ENCODE measurements at regions of chr16 and their contacts with region 1.

Region 1: GRCh38 chr16:84548971-84549844 is 44.7 kb upstream of the MEAK7 start:
- DNase-seq: peak; percentile 82
- ATAC-seq: peak; percentile 57
- H3K4me3 Mint-ChIP-seq: peak overlapping the region; percentile 84
- H3K27ac Mint-ChIP-seq: peak overlapping the region; percentile 98
- H3K4me1 Mint-ChIP-seq: peaks cover 54% of the 10 kb centered on the region
- H3K27me3 Mint-ChIP-seq: no peaks in the 10 kb centered on the region
- CTCF ChIP-seq: peak; percentile 19

Region 2: DNA sequence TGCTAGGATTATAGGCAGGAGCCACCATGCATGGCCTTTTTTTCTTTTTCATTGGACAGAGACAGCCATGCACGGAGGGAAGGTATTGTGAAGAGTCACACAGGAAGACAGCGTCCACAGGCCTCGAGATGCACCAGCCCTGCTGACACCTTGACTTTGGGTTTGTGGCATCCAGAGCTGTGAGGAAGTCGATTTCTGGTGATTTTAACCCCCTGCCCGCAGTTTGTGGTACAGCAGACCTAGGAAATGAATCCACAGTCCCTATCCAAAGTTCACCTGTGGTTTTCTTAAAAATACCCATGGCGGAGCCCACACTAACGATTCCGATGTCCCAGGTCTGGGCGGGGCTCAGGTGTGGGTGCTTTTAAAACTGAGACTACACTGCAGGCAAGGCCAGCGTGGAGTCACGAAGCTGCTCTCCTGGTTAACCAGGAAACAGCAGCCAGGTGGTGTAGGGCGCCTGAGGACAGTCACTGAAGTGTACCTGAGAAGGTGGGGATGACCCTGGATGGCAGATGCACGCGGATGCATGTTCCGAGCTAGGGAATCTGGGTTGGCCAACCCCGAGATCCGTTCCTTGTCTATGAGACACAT is 30.4 kb before region 1 on chr16:
- CTCF ChIA-PET with region 1: interaction called, 11 read pairs
- POLR2A ChIA-PET with region 1: interaction called, 40 read pairs
- intact Hi-C with region 1: loop called (anchors 2 kb)
- DNase-seq: peak; percentile 90
- ATAC-seq: peak; percentile 59
- H3K4me3 Mint-ChIP-seq: peak overlapping the region; percentile 57
- H3K27ac Mint-ChIP-seq: peak overlapping the region; percentile 89
- H3K4me1 Mint-ChIP-seq: peaks cover 64% of the 10 kb centered on the region
- H3K27me3 Mint-ChIP-seq: no peaks in the 10 kb centered on the region
- CTCF ChIP-seq: peak; percentile 30

Region 3: GRCh38 chr16:84599521-84600202 is 50.5 kb after region 1 on chr16:
- CTCF ChIA-PET with region 1: interaction called, 4 read pairs
- POLR2A ChIA-PET with region 1: interaction called, 29 read pairs
- intact Hi-C with region 1: loop called (anchors 5 kb)
- DNase-seq: peak; percentile 93
- ATAC-seq: peak; percentile 61
- H3K4me3 Mint-ChIP-seq: peak overlapping the region; percentile 83
- H3K27ac Mint-ChIP-seq: peak overlapping the region; percentile 100
- H3K4me1 Mint-ChIP-seq: peaks cover 92% of the 10 kb centered on the region
- H3K27me3 Mint-ChIP-seq: no peaks in the 10 kb centered on the region
- CTCF ChIP-seq: no peak

Region 4: GRCh38 chr16:84647828-84648594 is 98.8 kb after region 1 on chr16 and contains the start of gene KLHL36:
- CTCF ChIA-PET with region 1: no interaction called
- POLR2A ChIA-PET with region 1: no interaction called
- intact Hi-C with region 1: no loop called
- DNase-seq: peak; percentile 67
- ATAC-seq: peak; percentile 89
- H3K4me3 Mint-ChIP-seq: peak within 1 kb of the TSS; percentile 77
- H3K27ac Mint-ChIP-seq: peak within 1 kb of the TSS; percentile 83
- H3K4me1 Mint-ChIP-seq: peaks cover 35% of the 10 kb centered on the region
- H3K27me3 Mint-ChIP-seq: peaks cover 2% of the 10 kb centered on the region
- CTCF ChIP-seq: no peak
- total RNA-seq, gene KLHL36: 41.0 to 44.0 TPM

Measured in activated CD8-positive, alpha-beta T cell treated with anti-CD3 and anti-CD28 coated beads for 36 hours (primary cell).